Activated CD4-positive, alpha-beta memory T cell treated with anti-CD3 and anti-CD28 coated beads for 36 hours (primary cell): ENCODE measurements at regions of chr6 and their contacts with region 1.

Region 1: GRCh38 chr6:527989-528673 is 128.8 kb downstream of the HUS1B start:
- DNase-seq: no peak
- H3K4me3 Mint-ChIP-seq: peak overlapping the region; percentile 16
- H3K27ac Mint-ChIP-seq: peak overlapping the region; percentile 87
- H3K4me1 Mint-ChIP-seq: peaks cover 30% of the 10 kb centered on the region
- H3K27me3 Mint-ChIP-seq: no peaks in the 10 kb centered on the region

Region 2: GRCh38 chr6:446418-447366 is 81.4 kb before region 1 on chr6:
- CTCF ChIA-PET with region 1: no interaction called
- POLR2A ChIA-PET with region 1: no interaction called
- intact Hi-C with region 1: no loop called
- DNase-seq: peak; percentile 97
- H3K4me3 Mint-ChIP-seq: peak overlapping the region; percentile 77
- H3K27ac Mint-ChIP-seq: peak overlapping the region; percentile 97
- H3K4me1 Mint-ChIP-seq: peaks cover 55% of the 10 kb centered on the region
- H3K27me3 Mint-ChIP-seq: peaks cover 1% of the 10 kb centered on the region

Region 3: DNA sequence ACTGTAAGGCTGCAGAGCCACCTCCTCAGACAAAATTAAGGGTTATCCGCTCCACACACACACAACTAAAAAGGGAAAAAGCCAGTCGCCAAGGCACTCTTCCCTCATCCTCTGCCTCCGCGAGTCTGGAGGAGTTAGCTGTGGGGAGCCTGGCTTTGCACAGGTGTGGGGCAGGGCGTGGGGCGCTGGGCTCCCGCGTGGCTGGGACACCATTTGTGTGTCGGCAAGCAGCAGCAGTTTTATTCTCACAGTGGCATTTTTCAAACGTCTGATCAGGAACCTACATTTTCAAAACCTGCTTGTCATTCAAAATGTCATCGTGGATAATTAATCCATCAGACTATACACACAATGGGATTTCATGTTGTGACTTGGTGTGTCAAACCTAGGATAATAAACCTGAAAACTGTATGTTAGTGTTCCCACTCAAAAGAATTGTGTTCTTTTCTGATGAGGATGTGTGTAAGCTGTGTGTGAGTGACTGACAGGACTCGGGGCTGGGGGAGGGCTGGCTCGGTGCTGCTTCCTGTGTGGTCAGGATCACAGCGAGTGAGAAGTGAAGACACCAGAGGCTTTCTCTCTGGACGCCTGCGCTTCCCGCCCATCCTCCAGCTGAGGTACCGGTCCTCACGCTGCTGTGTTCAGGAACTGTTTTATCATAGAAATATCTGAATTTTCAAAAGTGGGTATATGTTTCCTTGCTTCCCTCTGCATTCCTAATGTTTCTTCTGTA is 53.5 kb before region 1 on chr6:
- CTCF ChIA-PET with region 1: no interaction called
- POLR2A ChIA-PET with region 1: no interaction called
- intact Hi-C with region 1: no loop called
- DNase-seq: peak; percentile 92
- H3K4me3 Mint-ChIP-seq: peak overlapping the region; percentile 44
- H3K27ac Mint-ChIP-seq: peak overlapping the region; percentile 83
- H3K4me1 Mint-ChIP-seq: peaks cover 74% of the 10 kb centered on the region
- H3K27me3 Mint-ChIP-seq: peaks cover 4% of the 10 kb centered on the region

Region 4: GRCh38 chr6:506508-506907 is 21.6 kb before region 1 on chr6:
- CTCF ChIA-PET with region 1: interaction called, 3 read pairs
- POLR2A ChIA-PET with region 1: interaction called, 3 read pairs
- intact Hi-C with region 1: loop called (anchors 1 kb)
- DNase-seq: peak; percentile 76
- H3K4me3 Mint-ChIP-seq: peak overlapping the region; percentile 30
- H3K27ac Mint-ChIP-seq: peak overlapping the region; percentile 100
- H3K4me1 Mint-ChIP-seq: peaks cover 95% of the 10 kb centered on the region
- H3K27me3 Mint-ChIP-seq: no peaks in the 10 kb centered on the region

Region 5: DNA sequence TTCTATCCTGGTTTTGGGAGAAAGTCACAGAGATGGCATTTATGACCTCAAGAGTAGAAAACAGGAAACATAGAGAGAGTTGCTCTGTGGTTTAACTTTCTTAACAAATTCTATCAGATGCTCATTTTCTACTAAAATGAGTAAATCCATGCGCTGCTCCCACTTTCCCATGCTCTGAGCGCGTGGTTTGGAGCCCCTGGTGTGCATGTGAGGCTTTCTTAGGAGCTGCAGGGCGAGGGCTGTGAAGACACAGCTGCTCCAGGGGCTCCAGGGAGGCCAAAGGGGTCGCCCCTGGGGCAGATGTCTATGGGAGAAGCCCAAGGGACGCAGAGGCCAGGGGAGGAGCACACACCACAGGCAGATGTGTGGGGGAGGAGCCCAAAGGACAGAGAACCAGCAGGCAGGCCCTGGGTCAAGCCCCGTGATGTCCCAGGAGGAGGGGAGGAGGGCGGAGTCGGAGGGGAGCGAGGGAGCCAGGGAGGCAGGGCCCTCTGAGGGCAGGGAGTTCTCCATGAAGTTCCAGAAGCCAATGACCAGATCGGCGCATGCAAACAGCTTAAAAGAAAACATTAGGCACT is 13.6 kb before region 1 on chr6:
- CTCF ChIA-PET with region 1: no interaction called
- POLR2A ChIA-PET with region 1: interaction called, 3 read pairs
- intact Hi-C with region 1: loop called (anchors 1 kb)
- DNase-seq: peak; percentile 60
- H3K4me3 Mint-ChIP-seq: peak overlapping the region; percentile 17
- H3K27ac Mint-ChIP-seq: peak overlapping the region; percentile 85
- H3K4me1 Mint-ChIP-seq: peaks cover 64% of the 10 kb centered on the region
- H3K27me3 Mint-ChIP-seq: no peaks in the 10 kb centered on the region

Region 6: DNA sequence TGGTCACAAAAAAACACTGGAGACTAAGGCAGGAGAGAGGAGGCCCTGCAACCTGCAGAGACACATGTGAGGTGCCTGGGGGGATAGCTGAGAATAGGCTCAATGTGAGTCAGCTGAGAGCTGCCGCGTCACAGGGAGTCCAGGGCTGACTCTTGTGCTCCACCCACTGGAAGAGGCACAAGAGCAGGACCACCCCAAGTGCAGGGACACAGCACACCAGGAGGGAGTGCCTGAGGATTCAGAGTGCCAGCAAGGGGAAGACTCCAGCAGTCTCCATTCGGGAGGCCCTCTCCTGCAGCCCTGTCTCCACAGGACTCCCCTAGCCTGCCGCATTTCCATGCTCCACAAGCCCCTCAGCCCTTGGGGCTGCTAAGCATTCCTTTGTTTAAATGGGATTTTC is 23.3 kb after region 1 on chr6:
- CTCF ChIA-PET with region 1: no interaction called
- POLR2A ChIA-PET with region 1: no interaction called
- intact Hi-C with region 1: loop called (anchors 1 kb)
- DNase-seq: peak; percentile 68
- H3K4me3 Mint-ChIP-seq: no peak overlapping the region
- H3K27ac Mint-ChIP-seq: peak overlapping the region; percentile 97
- H3K4me1 Mint-ChIP-seq: peaks cover 69% of the 10 kb centered on the region
- H3K27me3 Mint-ChIP-seq: no peaks in the 10 kb centered on the region

Region 7: DNA sequence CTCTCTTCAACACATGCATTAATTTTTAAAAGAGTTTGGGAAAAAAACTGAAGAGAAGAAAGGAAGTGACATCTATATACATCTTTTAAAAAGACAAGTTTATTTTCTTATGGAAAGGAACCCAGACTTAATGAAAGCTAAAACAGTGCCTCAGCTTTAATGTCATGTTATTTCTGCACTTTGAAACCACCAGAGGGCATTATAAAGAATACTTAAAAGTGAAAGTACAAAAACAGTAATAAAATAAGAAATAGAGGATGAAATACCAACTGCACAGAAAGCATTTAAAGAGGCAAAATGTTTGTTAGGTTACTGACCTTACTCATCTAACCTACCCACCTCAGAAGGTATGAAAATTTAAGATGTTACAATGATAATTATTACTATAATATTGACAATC is 30.0 kb after region 1 on chr6:
- CTCF ChIA-PET with region 1: no interaction called
- POLR2A ChIA-PET with region 1: no interaction called
- intact Hi-C with region 1: loop called (anchors 1 kb)
- DNase-seq: no peak
- H3K4me3 Mint-ChIP-seq: no peak overlapping the region
- H3K27ac Mint-ChIP-seq: peak overlapping the region; percentile 87
- H3K4me1 Mint-ChIP-seq: peaks cover 60% of the 10 kb centered on the region
- H3K27me3 Mint-ChIP-seq: no peaks in the 10 kb centered on the region

Region 8: GRCh38 chr6:636488-636887 is 108.4 kb after region 1 on chr6:
- CTCF ChIA-PET with region 1: no interaction called
- POLR2A ChIA-PET with region 1: no interaction called
- intact Hi-C with region 1: no loop called
- DNase-seq: peak; percentile 16
- H3K4me3 Mint-ChIP-seq: no peak overlapping the region
- H3K27ac Mint-ChIP-seq: no peak overlapping the region
- H3K4me1 Mint-ChIP-seq: peaks cover 20% of the 10 kb centered on the region
- H3K27me3 Mint-ChIP-seq: no peaks in the 10 kb centered on the region